Mammary epithelial cell (primary cell): ENCODE measurements at regions of chr21 and their contacts with region 1.

Region 1: DNA sequence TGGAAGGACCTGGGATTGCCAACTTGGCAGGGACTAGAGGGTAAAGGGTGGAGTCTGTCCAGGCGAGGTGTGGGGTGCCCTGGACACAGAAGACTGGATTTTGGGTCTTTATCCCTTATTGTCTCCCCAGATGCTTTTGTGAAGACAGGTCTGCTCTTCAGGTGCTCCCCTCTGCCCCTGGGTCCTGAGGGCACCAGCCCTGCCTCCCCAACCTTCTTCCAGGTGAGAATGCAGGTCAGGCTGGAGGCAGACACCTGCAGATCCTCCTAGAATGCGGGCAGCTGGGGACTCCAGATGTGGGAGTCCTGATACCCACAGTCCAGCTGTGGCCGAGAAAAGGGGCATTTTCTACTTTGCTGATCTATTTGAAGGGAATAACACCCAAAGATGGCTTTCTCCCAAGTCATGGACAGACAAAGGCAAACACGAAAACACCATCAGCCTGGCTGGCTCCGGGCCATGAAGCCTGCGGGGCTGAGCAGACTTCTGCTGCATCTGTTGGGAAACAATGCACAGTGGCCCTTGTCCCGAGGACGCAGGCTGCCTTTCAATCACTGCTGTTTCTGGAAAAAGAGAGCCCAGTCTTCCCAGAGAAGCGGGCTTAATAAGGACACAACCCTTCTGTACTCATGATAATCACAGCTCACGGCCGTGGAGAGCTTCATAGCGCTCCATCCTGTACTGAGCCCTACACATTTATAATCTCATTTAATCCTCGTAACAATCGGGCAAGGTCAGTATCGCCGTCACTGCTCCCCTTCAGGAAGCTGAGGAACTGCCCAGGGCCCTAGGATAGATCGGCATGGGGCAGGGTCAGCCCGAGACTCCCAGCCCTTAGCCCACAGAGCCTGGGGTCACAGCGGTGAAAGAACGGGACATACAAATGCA is 62.0 kb upstream of the ABCG1 start:
- DNase-seq: no peak
- H3K4me3 ChIP-seq: no peak overlapping the region
- H3K27ac ChIP-seq: no peak overlapping the region
- H3K4me1 ChIP-seq: no peaks in the 10 kb centered on the region
- H3K27me3 ChIP-seq: no peaks in the 10 kb centered on the region
- CTCF ChIP-seq: no peak

Region 2: DNA sequence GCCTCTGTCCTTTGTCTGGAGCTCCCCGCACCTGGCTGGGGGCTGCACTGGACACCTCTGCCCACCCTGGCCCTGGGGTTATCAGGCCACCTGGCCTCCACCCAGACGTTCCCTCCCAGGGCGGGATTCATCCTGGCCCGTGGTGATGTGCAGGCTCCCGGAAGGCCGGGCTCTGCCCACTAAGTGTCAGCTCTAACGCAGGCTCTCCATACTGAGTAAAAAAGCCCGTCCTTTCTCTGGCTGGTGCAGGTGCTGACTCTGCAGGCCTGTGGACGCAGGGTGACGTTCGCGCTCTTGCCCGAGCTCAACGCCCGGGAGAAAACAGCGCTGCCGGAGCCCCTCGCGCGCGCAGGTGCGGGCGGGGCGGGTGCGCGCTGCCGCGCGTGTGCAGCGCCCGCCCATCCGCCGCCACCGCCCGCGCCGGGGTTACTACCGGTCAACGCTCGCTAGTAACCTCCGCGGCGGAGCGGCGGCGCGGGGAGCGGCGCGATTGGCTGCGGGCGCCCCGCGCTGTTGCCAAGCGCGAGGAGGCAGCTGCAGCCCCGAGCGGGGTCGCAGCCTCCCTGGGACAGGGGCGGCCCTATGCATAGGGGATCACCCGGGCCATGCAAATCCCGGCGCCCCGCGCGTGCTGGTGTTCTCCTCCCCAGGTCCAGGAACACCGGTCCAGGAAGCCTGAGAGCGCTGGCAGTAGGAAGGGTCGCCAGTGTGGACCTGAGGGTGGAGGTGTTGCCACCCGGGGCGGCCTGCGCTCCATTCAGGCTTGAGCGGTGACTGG is 77.7 kb after region 1 on chr21:
- CTCF ChIA-PET with region 1: interaction called, 4 read pairs
- dilution Hi-C with region 1: loop called (anchors 5 kb)
- in situ Hi-C with region 1: no loop called
- intact Hi-C with region 1: no loop called
- DNase-seq: peak; percentile 40
- H3K4me3 ChIP-seq: peak overlapping the region; percentile 18 to 57 (median 52)
- H3K27ac ChIP-seq: no peak overlapping the region
- H3K4me1 ChIP-seq: peaks cover 19% of the 10 kb centered on the region
- H3K27me3 ChIP-seq: no peaks in the 10 kb centered on the region
- CTCF ChIP-seq: no peak

Region 3: DNA sequence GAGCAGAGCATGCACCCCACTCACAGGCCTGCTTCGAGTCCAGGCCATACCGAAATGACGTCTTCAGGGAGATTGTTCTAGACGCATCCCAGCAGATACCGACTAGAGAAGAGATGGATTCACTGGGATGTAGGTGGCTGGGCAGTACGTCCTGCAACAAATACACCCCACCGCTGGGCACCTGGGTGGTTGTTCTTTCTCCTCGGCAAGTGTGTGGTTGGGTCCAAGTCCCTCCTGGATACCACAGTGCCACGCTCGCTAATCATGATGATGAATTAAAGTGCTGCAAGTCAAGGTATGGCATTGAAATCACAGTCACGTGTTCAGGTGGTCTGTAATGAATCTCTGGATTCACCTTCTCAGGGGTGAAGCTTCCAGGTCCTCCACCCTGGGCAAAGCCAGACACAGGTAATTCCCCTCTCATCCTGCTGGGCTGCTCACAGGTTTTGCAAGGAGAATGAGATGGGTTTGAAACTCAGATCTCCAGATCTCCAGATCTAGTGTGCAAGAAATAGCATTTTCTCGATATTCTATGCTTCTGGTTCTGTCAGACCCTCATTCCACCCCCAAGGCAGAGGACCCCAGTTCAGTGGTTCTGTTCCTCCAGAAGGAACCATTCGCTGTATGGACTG is 292.5 kb after region 1 on chr21:
- CTCF ChIA-PET with region 1: no interaction called
- dilution Hi-C with region 1: loop called (anchors 5 kb)
- in situ Hi-C with region 1: loop called (anchors 10 kb)
- intact Hi-C with region 1: no loop called
- DNase-seq: no peak
- H3K4me3 ChIP-seq: no peak overlapping the region
- H3K27ac ChIP-seq: no peak overlapping the region
- H3K4me1 ChIP-seq: no peaks in the 10 kb centered on the region
- H3K27me3 ChIP-seq: no peaks in the 10 kb centered on the region
- CTCF ChIP-seq: no peak